ENCODE measurements at regions of chr2 and their contacts with region 1.

Region 1: GRCh38 chr2:27050281-27050995 is 1.0 kb upstream of the AGBL5 start:
- DNase-seq: peak; percentile 99
- H3K4me3 ChIP-seq: peak overlapping the region; percentile 74 to 99 (median 94)
- H3K27ac ChIP-seq: peak overlapping the region; percentile 89 to 96 (median 94)
- H3K4me1 ChIP-seq: peaks cover 14 to 34% (median 23%) of the 10 kb centered on the region in 4 donors
- H3K27me3 ChIP-seq: no peaks in the 10 kb centered on the region
- CTCF ChIP-seq: peak; percentile 35 to 68 (median 53)
- EP300 ChIP-seq: no peak
- POLR2A ChIP-seq: peak; percentile 33

Region 2: GRCh38 chr2:27071277-27071989 is 21.0 kb after region 1 on chr2 and contains the start of gene OST4:
- intact Hi-C with region 1: loop called (anchors 2 kb)
- DNase-seq: peak; percentile 97
- H3K4me3 ChIP-seq: peak within 1 kb of the TSS; percentile 75 to 98 (median 90)
- H3K27ac ChIP-seq: peak within 1 kb of the TSS; percentile 98 to 99 (median 98)
- H3K4me1 ChIP-seq: peaks cover 62 to 87% (median 80%) of the 10 kb centered on the region in 4 donors
- H3K27me3 ChIP-seq: no peaks in the 10 kb centered on the region
- CTCF ChIP-seq: no peak
- EP300 ChIP-seq: no peak
- POLR2A ChIP-seq: peak; percentile 40
- total RNA-seq, gene OST4: 200 to 352 (median 243) TPM

Region 3: GRCh38 chr2:27078267-27079194 is 28.1 kb after region 1 on chr2 and contains the start of gene EMILIN1:
- intact Hi-C with region 1: loop called (anchors 2 kb)
- DNase-seq: peak; percentile 97
- H3K4me3 ChIP-seq: peak within 1 kb of the TSS; percentile 56 to 76 (median 70)
- H3K27ac ChIP-seq: peak within 1 kb of the TSS; percentile 98 to 99 (median 98)
- H3K4me1 ChIP-seq: peaks cover 54 to 97% (median 96%) of the 10 kb centered on the region in 4 donors
- H3K27me3 ChIP-seq: no peaks in the 10 kb centered on the region
- CTCF ChIP-seq: peak in 1 of 3 experiments; percentile 18
- EP300 ChIP-seq: no peak
- POLR2A ChIP-seq: no peak
- total RNA-seq, gene EMILIN1: 126 to 288 (median 168) TPM

Region 4: DNA sequence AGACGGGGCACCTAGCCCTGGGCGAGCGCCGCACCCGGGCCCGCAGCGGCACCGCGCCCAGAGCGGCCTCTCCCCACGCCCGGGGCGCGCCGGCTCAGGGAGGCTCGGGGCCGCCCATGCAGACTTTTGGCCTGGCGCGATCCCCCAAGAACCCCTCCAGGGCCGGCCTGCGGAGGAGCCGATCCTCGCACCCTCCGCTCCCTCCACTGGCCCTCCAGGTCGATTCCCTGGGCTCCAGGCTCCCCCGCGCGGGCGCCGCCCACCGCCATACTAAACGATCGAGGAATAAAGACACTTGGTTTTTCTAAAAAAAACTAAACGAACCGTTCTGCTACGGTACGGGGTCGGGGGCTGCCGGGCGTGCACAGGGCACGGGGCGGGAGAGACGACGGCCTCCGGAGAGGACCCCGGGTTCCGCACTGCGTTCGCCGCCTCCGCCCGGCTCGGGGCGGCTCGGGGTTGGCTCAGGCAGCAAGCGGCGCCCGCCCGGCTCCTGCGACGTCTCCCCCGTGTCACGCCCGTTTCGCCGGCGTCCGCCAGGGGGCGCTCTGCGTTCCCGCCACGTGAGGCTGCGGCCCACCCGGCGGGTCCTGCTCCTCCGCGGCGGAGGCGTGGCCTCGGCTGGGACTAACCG is 35.8 kb after region 1 on chr2:
- intact Hi-C with region 1: loop called (anchors 1 kb)
- DNase-seq: peak; percentile 98
- H3K4me3 ChIP-seq: peak overlapping the region; percentile 68 to 81 (median 72)
- H3K27ac ChIP-seq: peak overlapping the region; percentile 92 to 95 (median 93)
- H3K4me1 ChIP-seq: peaks cover 28 to 70% (median 62%) of the 10 kb centered on the region in 4 donors
- H3K27me3 ChIP-seq: no peaks in the 10 kb centered on the region
- CTCF ChIP-seq: peak; percentile 91 to 96 (median 96)
- EP300 ChIP-seq: no peak
- POLR2A ChIP-seq: peak; percentile 73

Measured in esophagus muscularis mucosa (tissue), 4 donors.